ENCODE measurements at regions of chr6 and their contacts with region 1.

Region 1: GRCh38 chr6:7086488-7086887 is 21.3 kb upstream of the RREB1 start:
- DNase-seq: peak; percentile 66
- ATAC-seq: peak; percentile 86
- H3K4me3 ChIP-seq: peak overlapping the region; percentile 48
- H3K27ac ChIP-seq: peak overlapping the region; percentile 38
- H3K4me1 ChIP-seq: peaks cover 18% of the 10 kb centered on the region
- H3K27me3 ChIP-seq: no peaks in the 10 kb centered on the region
- CTCF ChIP-seq: peak in 2 of 3 experiments; percentile 43 to 44; a peak in 3 of 6 replicates
- EP300 ChIP-seq: 0 out of 4 replicates have a peak, but pooled peaks of 1 of the 2 experiments have one; percentile 9
- POLR2A ChIP-seq: no peak
- RAD21 ChIP-seq: peak; percentile 72

Region 2: DNA sequence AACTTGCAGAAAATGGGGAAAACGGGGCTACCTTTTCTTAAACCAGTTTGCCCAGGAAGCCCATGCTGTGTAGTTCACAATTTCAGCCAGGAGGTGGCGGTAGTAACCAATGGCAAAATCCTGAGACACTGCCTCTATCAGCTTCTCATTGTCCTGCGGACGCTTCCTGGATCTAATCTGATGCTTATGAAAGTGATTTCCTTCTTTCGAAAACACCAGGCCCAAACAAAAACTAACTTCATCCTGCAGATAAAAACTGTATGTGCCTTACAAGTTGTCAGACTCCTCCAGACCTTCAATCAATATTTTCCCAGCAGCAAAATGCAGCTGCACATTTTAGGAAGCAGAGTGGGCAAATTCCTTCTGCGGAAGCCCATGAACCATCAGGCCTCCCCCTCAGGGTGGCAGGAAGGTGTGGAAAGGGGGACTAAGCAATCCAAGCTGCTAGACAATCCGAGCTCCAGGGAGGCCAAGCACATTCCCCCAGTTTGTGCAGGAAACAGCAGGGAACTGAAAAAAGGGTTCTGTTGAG is 409.5 kb before region 1 on chr6:
- CTCF ChIA-PET with region 1: interaction called, 12 read pairs
- POLR2A ChIA-PET with region 1: no interaction called
- RAD21 ChIA-PET with region 1: interaction called, 8 read pairs
- SMC1A ChIA-PET with region 1: interaction called, 11 read pairs
- in situ Hi-C with region 1: no loop called
- intact Hi-C with region 1: loop called (anchors 5 kb)
- DNase-seq: peak; percentile 66
- ATAC-seq: peak; percentile 94
- H3K4me3 ChIP-seq: no peak overlapping the region
- H3K27ac ChIP-seq: 0 out of 2 replicates have a peak overlapping the region, but pooled peaks have one; percentile 20
- H3K4me1 ChIP-seq: peaks cover 8% of the 10 kb centered on the region
- H3K27me3 ChIP-seq: no peaks in the 10 kb centered on the region
- CTCF ChIP-seq: peak; percentile 91 to 97 (median 95); a peak in 5 of 6 replicates
- EP300 ChIP-seq: no peak
- POLR2A ChIP-seq: no peak
- RAD21 ChIP-seq: peak; percentile 96

Region 3: GRCh38 chr6:6788394-6789020 is 298.0 kb before region 1 on chr6:
- CTCF ChIA-PET with region 1: interaction called, 24 read pairs
- POLR2A ChIA-PET with region 1: no interaction called
- RAD21 ChIA-PET with region 1: interaction called, 10 read pairs
- SMC1A ChIA-PET with region 1: interaction called, 9 read pairs
- in situ Hi-C with region 1: no loop called
- intact Hi-C with region 1: no loop called
- DNase-seq: no peak
- ATAC-seq: peak; percentile 92
- H3K4me3 ChIP-seq: no peak overlapping the region
- H3K27ac ChIP-seq: no peak overlapping the region
- H3K4me1 ChIP-seq: no peaks in the 10 kb centered on the region
- H3K27me3 ChIP-seq: no peaks in the 10 kb centered on the region
- CTCF ChIP-seq: peak; percentile 48 to 83 (median 78)
- EP300 ChIP-seq: no peak
- POLR2A ChIP-seq: no peak
- RAD21 ChIP-seq: peak; percentile 90

Region 4: DNA sequence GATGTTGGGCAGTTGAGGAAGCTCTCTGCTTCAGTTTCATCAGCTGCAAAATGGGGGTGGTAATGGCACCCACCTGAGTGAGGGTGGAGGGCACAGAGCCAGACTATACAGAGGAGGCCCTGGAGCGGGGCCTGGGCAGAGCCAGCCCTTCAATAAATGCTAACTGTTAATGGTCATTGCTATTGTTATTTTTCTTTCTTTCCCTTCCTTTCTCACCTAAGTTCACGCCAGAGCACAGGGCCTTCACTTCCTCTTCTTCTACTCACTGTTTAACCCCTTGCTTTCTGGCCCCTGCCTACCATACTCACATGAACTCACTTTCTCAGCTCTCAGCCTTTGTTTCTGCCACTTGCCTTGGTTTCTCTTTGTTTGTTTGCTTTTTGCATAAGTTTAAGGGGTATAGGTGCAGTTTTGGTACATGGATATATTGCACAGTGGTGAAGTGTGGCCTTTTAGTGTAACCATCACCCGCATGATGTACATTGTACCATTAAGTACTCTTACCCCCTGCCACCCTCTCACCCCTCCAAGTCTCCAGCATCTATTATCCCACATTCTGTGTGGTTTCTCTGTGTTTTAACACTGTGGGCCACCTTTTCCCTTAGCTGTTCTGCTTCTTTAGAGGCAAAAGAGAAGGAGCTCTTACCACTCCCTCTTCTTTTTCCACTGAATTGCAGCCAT is 13.7 kb after region 1 on chr6:
- CTCF ChIA-PET with region 1: interaction called, 17 read pairs
- POLR2A ChIA-PET with region 1: interaction called, 6 read pairs
- RAD21 ChIA-PET with region 1: interaction called, 9 read pairs
- SMC1A ChIA-PET with region 1: interaction called, 17 read pairs
- in situ Hi-C with region 1: no loop called
- intact Hi-C with region 1: no loop called
- DNase-seq: no peak
- ATAC-seq: peak; percentile 83
- H3K4me3 ChIP-seq: no peak overlapping the region
- H3K27ac ChIP-seq: no peak overlapping the region
- H3K4me1 ChIP-seq: peaks cover 7% of the 10 kb centered on the region
- H3K27me3 ChIP-seq: no peaks in the 10 kb centered on the region
- CTCF ChIP-seq: no peak
- EP300 ChIP-seq: no peak
- POLR2A ChIP-seq: no peak
- RAD21 ChIP-seq: no peak

Region 5: GRCh38 chr6:7140631-7141378 is 54.3 kb after region 1 on chr6:
- CTCF ChIA-PET with region 1: interaction called, 12 read pairs
- POLR2A ChIA-PET with region 1: no interaction called
- RAD21 ChIA-PET with region 1: interaction called, 28 read pairs
- SMC1A ChIA-PET with region 1: interaction called, 40 read pairs
- in situ Hi-C with region 1: no loop called
- intact Hi-C with region 1: no loop called
- DNase-seq: no peak
- ATAC-seq: peak; percentile 74
- H3K4me3 ChIP-seq: peak overlapping the region; percentile 81
- H3K27ac ChIP-seq: peak overlapping the region; percentile 87
- H3K4me1 ChIP-seq: peaks cover 85% of the 10 kb centered on the region
- H3K27me3 ChIP-seq: no peaks in the 10 kb centered on the region
- CTCF ChIP-seq: no peak
- EP300 ChIP-seq: no peak
- POLR2A ChIP-seq: peak; percentile 82
- RAD21 ChIP-seq: no peak

Region 6: DNA sequence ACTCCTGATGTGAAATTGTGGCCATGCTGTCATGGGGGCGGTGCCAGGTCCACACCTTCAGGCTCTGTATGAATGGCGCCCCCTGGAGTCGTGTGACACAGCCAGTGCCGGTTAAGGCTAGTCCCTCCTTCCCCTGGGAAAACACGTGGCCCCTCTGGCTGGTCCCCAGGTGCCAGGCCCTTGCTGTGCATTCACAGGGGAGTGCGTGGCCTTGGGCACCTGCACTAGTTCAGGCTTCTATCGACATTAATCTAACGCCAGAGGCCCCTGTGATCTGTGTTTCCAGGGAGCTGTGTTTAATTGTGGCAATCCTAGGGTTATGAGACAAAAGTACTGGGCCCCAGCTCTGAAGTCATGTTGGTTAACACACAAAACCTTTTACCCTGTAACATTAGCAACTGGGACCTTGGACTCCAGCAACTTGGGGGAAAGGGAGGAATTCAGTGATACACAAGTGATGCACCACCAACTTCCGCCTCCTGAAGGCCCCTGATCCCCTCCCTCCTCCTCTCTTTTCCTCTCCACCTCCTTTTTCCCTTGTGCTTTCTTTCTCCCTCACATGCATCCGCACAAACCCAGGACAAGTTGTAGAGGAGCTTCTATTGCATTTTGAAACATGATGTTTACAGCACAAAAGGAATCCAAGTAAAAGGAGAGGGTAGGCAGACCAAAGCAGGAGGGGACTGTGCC is 152.6 kb after region 1 on chr6:
- CTCF ChIA-PET with region 1: interaction called, 33 read pairs
- POLR2A ChIA-PET with region 1: no interaction called
- RAD21 ChIA-PET with region 1: interaction called, 12 read pairs
- SMC1A ChIA-PET with region 1: interaction called, 35 read pairs
- in situ Hi-C with region 1: no loop called
- intact Hi-C with region 1: loop called (anchors 2 kb)
- DNase-seq: no peak
- ATAC-seq: peak; percentile 74
- H3K4me3 ChIP-seq: no peak overlapping the region
- H3K27ac ChIP-seq: peak overlapping the region; percentile 38
- H3K4me1 ChIP-seq: peaks cover 71% of the 10 kb centered on the region
- H3K27me3 ChIP-seq: no peaks in the 10 kb centered on the region
- CTCF ChIP-seq: peak; percentile 71 to 87 (median 79)
- EP300 ChIP-seq: no peak
- POLR2A ChIP-seq: peak; percentile 41; the same call in 1 of the 2 replicates
- RAD21 ChIP-seq: peak; percentile 56